Panc1 (cell line): ENCODE measurements at regions of chr13 and their contacts with region 1.

Region 1: GRCh38 chr13:95708811-95709490 is 32.0 kb downstream of the DNAJC3 start:
- DNase-seq: no peak
- ATAC-seq: no peak
- H3K4me3 ChIP-seq: no peak overlapping the region
- H3K27ac ChIP-seq: no peak overlapping the region
- H3K4me1 ChIP-seq: no peaks in the 10 kb centered on the region
- H3K27me3 ChIP-seq: no peaks in the 10 kb centered on the region
- CTCF ChIP-seq: no peak

Region 2: DNA sequence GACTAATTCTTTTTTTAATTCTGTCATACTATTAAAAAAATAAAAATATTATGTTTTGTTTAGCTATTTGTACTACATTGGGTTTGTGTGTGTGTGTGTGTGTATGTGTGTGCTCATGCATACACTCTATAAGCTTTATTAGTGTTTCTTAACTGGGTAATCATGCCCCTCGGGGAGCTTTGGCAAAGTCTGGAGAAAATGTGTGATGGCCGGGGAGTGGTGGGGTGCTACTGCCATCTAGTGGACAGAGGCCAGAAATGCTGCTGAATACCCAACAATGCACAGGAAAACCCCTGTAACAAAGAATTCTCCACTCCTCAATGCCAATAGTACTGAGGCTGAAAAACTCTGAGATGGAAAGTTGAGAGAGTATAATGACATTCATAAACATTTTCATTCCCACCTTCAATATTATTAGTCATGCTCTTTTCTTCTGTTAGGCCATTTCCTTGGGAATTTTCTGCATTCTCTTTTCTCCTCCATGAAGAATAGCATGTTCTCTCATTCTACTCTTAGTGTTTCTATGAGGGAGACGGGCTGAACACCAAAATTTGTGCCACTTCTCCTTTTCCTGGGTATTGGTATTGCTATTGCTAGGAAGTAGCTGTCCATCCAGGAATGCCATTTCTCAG is 125.3 kb after region 1 on chr13:
- CTCF ChIA-PET with region 1: no interaction called
- POLR2A ChIA-PET with region 1: no interaction called
- in situ Hi-C with region 1: no loop called
- intact Hi-C with region 1: no loop called
- DNase-seq: peak; percentile 27
- ATAC-seq: peak; percentile 85
- H3K4me3 ChIP-seq: no peak overlapping the region
- H3K27ac ChIP-seq: no peak overlapping the region
- H3K4me1 ChIP-seq: no peaks in the 10 kb centered on the region
- H3K27me3 ChIP-seq: no peaks in the 10 kb centered on the region
- CTCF ChIP-seq: peak; percentile 87

Region 3: GRCh38 chr13:96279904-96280303 is 571.0 kb after region 1 on chr13:
- CTCF ChIA-PET with region 1: interaction called, 10 read pairs
- POLR2A ChIA-PET with region 1: no interaction called
- in situ Hi-C with region 1: no loop called
- intact Hi-C with region 1: no loop called
- DNase-seq: no peak
- ATAC-seq: no peak
- H3K4me3 ChIP-seq: no peak overlapping the region
- H3K27ac ChIP-seq: no peak overlapping the region
- H3K4me1 ChIP-seq: no peaks in the 10 kb centered on the region
- H3K27me3 ChIP-seq: no peaks in the 10 kb centered on the region
- CTCF ChIP-seq: no peak